ENCODE measurements at regions of chr2 and their contacts with region 1.

Region 1: GRCh38 chr2:138827426-138828054 is 47.4 kb upstream of the NXPH2 start:
- DNase-seq: peak; percentile 15
- H3K4me3 Mint-ChIP-seq: no peak overlapping the region
- H3K27ac Mint-ChIP-seq: no peak overlapping the region
- H3K4me1 Mint-ChIP-seq: no peaks in the 10 kb centered on the region
- H3K27me3 Mint-ChIP-seq: peaks cover 6% of the 10 kb centered on the region

Region 2: GRCh38 chr2:137865954-137866540 is 961.5 kb before region 1 on chr2:
- CTCF ChIA-PET with region 1: interaction called, 55 read pairs
- POLR2A ChIA-PET with region 1: no interaction called
- intact Hi-C with region 1: loop called (anchors 1 kb)
- DNase-seq: peak; percentile 65
- H3K4me3 Mint-ChIP-seq: no peak overlapping the region
- H3K27ac Mint-ChIP-seq: no peak overlapping the region
- H3K4me1 Mint-ChIP-seq: no peaks in the 10 kb centered on the region
- H3K27me3 Mint-ChIP-seq: peaks cover 2% of the 10 kb centered on the region

Region 3: GRCh38 chr2:137910641-137911040 is 916.9 kb before region 1 on chr2:
- CTCF ChIA-PET with region 1: interaction called, 11 read pairs
- POLR2A ChIA-PET with region 1: no interaction called
- intact Hi-C with region 1: loop called (anchors 1 kb)
- DNase-seq: no peak
- H3K4me3 Mint-ChIP-seq: no peak overlapping the region
- H3K27ac Mint-ChIP-seq: no peak overlapping the region
- H3K4me1 Mint-ChIP-seq: no peaks in the 10 kb centered on the region
- H3K27me3 Mint-ChIP-seq: peaks cover 3% of the 10 kb centered on the region

Region 4: GRCh38 chr2:137947728-137948336 is 879.7 kb before region 1 on chr2:
- CTCF ChIA-PET with region 1: interaction called, 3 read pairs
- POLR2A ChIA-PET with region 1: no interaction called
- intact Hi-C with region 1: loop called (anchors 1 kb)
- DNase-seq: peak; percentile 42
- H3K4me3 Mint-ChIP-seq: no peak overlapping the region
- H3K27ac Mint-ChIP-seq: no peak overlapping the region
- H3K4me1 Mint-ChIP-seq: peaks cover 5% of the 10 kb centered on the region
- H3K27me3 Mint-ChIP-seq: no peaks in the 10 kb centered on the region

Region 5: GRCh38 chr2:138373993-138374408 is 453.5 kb before region 1 on chr2:
- CTCF ChIA-PET with region 1: no interaction called
- POLR2A ChIA-PET with region 1: no interaction called
- intact Hi-C with region 1: loop called (anchors 1 kb)
- DNase-seq: no peak
- H3K4me3 Mint-ChIP-seq: no peak overlapping the region
- H3K27ac Mint-ChIP-seq: no peak overlapping the region
- H3K4me1 Mint-ChIP-seq: no peaks in the 10 kb centered on the region
- H3K27me3 Mint-ChIP-seq: peaks cover under 1% of the 10 kb centered on the region

Region 6: DNA sequence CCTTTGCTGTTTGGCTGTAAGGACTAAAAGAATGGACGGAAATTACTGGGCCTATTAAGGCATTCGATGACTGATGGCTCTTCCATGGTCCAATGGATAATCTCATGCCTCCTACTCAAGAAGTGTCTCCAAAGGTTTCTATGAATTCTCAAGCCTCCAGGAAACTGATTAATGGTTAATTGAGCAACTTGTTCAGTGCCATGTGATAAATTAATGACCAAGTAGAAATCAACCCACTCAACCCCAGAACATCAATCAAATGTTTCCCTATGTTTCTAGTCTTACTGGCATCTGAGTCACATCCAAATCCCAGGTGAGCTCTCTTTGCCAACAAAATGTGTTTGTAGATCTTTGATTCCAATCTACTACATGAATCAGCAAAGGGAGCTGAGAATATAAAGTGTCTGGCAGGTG is 150.9 kb before region 1 on chr2:
- CTCF ChIA-PET with region 1: no interaction called
- POLR2A ChIA-PET with region 1: no interaction called
- intact Hi-C with region 1: no loop called
- DNase-seq: no peak
- H3K4me3 Mint-ChIP-seq: no peak overlapping the region
- H3K27ac Mint-ChIP-seq: no peak overlapping the region
- H3K4me1 Mint-ChIP-seq: no peaks in the 10 kb centered on the region
- H3K27me3 Mint-ChIP-seq: no peaks in the 10 kb centered on the region

Region 7: DNA sequence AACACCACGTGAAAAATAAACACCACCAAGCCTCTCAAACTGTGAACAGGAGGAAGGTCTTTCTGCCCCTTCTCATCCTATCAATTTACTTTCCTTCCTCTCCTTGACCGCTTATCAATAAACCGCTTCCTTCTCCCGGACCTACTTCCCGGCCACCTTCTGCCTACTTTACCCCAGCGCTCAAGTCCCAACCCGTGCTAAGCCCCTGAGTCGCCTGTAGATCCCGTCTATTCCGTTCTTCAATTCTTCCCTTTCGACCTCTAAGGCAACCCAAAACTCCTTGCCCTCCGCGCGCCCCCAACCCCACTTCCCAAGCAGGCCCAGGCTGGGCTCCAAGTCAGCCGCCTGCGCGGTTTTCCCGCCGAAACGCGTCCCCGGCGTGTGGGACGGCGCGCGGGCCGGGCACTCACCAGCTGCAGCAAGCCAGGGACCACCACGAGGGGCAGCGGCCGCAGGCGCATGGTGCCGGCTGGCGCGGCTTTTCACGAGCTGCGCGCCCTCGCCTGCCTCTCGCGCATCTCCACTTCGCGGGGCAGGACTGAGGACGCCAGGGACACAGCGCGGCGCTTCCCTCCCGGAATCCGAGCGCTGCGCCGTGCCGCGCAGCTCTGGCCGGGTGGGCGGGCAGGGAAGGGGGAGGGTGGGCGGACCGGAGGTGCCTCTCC is 47.6 kb before region 1 on chr2 and contains the start of gene NXPH2:
- CTCF ChIA-PET with region 1: no interaction called
- POLR2A ChIA-PET with region 1: no interaction called
- intact Hi-C with region 1: no loop called
- DNase-seq: no peak
- H3K4me3 Mint-ChIP-seq: no peak within 1 kb of the TSS
- H3K27ac Mint-ChIP-seq: no peak within 1 kb of the TSS
- H3K4me1 Mint-ChIP-seq: peaks cover 3% of the 10 kb centered on the region
- H3K27me3 Mint-ChIP-seq: peaks cover 32% of the 10 kb centered on the region
- total RNA-seq, gene NXPH2: not detected

Region 8: GRCh38 chr2:138846223-138846821 is 18.8 kb after region 1 on chr2:
- CTCF ChIA-PET with region 1: interaction called, 22 read pairs
- POLR2A ChIA-PET with region 1: no interaction called
- intact Hi-C with region 1: no loop called
- DNase-seq: no peak
- H3K4me3 Mint-ChIP-seq: no peak overlapping the region
- H3K27ac Mint-ChIP-seq: no peak overlapping the region
- H3K4me1 Mint-ChIP-seq: no peaks in the 10 kb centered on the region
- H3K27me3 Mint-ChIP-seq: no peaks in the 10 kb centered on the region

Measured in activated CD4-positive, alpha-beta memory T cell treated with anti-CD3 and anti-CD28 coated beads for 36 hours (primary cell).